ENCODE measurements at regions of chr19 and their contacts with region 1.

Region 1: DNA sequence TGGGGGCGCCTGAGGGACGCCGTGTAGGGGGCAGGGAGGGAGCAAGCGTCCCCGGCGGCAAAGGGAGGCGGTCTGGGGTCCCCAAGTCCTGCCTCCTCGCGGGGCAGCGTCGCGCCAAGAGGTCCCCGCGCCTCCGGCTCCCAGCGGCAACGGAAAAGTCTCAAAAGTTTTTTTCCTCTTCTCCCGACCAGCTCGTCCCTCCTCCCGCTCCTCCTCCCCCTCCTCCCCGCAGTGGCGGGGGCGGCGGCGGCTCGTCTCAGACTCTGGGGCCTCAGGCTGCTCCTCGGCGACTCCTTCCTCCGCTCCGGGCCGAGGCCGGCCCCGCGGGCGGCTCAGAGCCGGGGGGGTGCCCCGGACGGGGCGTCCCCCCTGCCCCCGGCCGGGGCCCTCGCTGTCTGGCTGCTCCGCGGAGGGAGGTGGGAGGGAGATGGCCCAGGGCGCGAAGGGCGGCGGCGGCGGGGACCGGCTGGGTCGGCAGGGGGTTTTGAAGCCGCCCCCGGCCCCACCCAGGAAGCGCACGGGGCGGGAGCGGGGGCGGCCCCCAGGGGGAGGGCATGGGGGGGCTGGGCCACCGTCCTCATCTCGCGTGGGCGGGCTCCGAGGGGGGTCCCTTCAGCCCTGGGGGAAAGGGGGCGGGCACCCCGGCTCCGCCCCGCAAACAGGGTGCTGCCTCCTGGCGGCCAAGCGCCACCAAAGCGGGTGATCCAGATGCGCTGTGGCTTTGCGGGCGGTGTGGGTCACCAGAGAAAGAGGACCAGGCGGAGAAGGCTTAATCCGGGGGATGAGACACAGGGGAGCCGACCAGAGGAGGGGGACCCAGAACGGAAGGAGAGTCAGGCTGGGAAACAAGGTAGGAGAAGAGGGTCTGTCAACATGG is at the start of gene TGFB1:
- DNase-seq: peak; percentile 90 to 97 (median 91)
- ATAC-seq: peak; percentile 64 to 78 (median 72)
- H3K4me3 ChIP-seq: peak within 1 kb of the TSS; percentile 52 to 98 (median 74)
- H3K27ac ChIP-seq: peak within 1 kb of the TSS; percentile 67 to 96 (median 90)
- H3K4me1 ChIP-seq: peaks cover 0 to 73% (median 25%) of the 10 kb centered on the region in 12 donors
- H3K27me3 ChIP-seq: no peaks in the 10 kb centered on the region
- CTCF ChIP-seq: peak; percentile 78 to 98 (median 90)
- POLR2A ChIP-seq: peak in 1 of 2 donors; percentile 65
- total RNA-seq, gene TGFB1: 9.4 to 68.8 (median 13.9) TPM

Region 2: DNA sequence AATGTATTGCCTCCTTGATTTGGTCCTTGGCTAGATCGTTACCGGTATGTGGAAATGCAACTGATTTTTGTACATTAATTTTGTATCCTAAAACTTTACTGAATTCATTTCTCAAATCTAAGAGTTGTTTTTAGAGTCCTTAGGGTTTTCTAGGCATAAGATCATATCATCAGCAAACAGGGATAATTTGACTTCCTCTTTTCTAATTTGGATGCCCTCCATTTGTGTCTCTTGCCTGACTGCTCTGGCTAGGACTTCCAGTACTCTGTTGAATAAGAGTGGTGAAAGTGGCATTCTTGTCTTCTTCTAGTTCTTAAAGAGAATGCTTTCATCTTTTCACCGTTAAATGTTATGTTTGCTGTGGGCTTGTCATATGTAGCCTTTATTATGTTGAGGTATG is 277.4 kb before region 1 on chr19:
- intact Hi-C with region 1: no loop called
- DNase-seq: no peak
- ATAC-seq: no peak
- H3K4me3 ChIP-seq: no peak overlapping the region
- H3K27ac ChIP-seq: no peak overlapping the region
- H3K4me1 ChIP-seq: no peaks in the 10 kb centered on the region
- H3K27me3 ChIP-seq: peaks cover 0 to 12% (median 0%) of the 10 kb centered on the region in 9 donors
- CTCF ChIP-seq: no peak
- POLR2A ChIP-seq: no peak

Region 3: GRCh38 chr19:41206926-41207750 is 146.6 kb before region 1 on chr19:
- intact Hi-C with region 1: loop called in 2 of 10 experiments (anchors 2 kb)
- DNase-seq: peak; percentile 82 to 95 (median 85)
- ATAC-seq: peak; percentile 75 to 89 (median 82)
- H3K4me3 ChIP-seq: peak overlapping the region in 6 of 12 donors; percentile 10 to 36 (median 17)
- H3K27ac ChIP-seq: peak overlapping the region in 11 of 12 donors; percentile 32 to 74 (median 69)
- H3K4me1 ChIP-seq: peaks cover 0 to 9% (median 0%) of the 10 kb centered on the region in 12 donors
- H3K27me3 ChIP-seq: no peaks in the 10 kb centered on the region
- CTCF ChIP-seq: no peak
- POLR2A ChIP-seq: no peak

Region 4: GRCh38 chr19:41321600-41322270 is 32.0 kb before region 1 on chr19:
- intact Hi-C with region 1: loop called in 7 of 10 experiments (anchors 2 to 5 kb)
- DNase-seq: peak in 4 of 5 donors; percentile 50 to 60 (median 60)
- ATAC-seq: no peak
- H3K4me3 ChIP-seq: no peak overlapping the region
- H3K27ac ChIP-seq: peak overlapping the region; percentile 23 to 95 (median 89)
- H3K4me1 ChIP-seq: peaks cover 4 to 60% (median 54%) of the 10 kb centered on the region in 12 donors
- H3K27me3 ChIP-seq: no peaks in the 10 kb centered on the region
- CTCF ChIP-seq: peak; percentile 52 to 81 (median 67)
- POLR2A ChIP-seq: no peak

Region 5: DNA sequence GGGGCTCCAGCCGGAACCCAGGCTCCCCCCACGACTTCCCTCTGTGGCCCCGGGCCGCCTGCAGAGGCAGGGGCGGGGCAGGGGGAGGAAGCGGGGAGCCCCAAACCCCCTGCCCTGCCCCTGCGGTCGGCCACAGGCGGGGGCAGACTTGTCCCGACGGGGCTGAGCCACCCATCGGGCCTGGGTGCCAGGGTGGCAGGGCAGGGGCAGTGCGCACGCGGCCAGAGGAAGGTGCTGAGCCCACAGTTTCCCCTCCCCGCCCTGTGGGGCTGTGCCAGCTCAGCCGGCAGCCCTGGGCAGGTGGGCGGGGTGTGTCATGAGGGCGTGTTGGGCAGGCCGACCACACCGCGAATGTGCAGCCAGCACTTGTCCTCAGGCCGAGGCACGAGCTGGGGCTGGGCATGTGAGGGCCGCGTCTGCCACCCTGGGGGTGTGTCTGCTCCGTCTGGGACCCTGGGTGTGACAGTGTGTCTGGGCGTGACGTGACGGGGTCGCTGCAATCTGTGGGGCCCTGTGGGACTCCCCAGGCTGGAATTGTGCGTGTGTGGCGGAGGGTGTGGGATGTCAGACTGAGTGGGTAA is 26.0 kb before region 1 on chr19:
- intact Hi-C with region 1: loop called in 7 of 10 experiments (anchors 2 to 5 kb)
- DNase-seq: peak; percentile 78 to 91 (median 84)
- ATAC-seq: peak; percentile 8 to 57 (median 38)
- H3K4me3 ChIP-seq: peak overlapping the region in 10 of 12 donors; percentile 18 to 49 (median 44)
- H3K27ac ChIP-seq: peak overlapping the region; percentile 66 to 95 (median 88)
- H3K4me1 ChIP-seq: peaks cover 4 to 95% (median 63%) of the 10 kb centered on the region in 12 donors
- H3K27me3 ChIP-seq: no peaks in the 10 kb centered on the region
- CTCF ChIP-seq: no peak
- POLR2A ChIP-seq: no peak

Region 6: GRCh38 chr19:41334793-41335192 is 18.9 kb before region 1 on chr19:
- intact Hi-C with region 1: loop called in 1 of 10 experiments (anchors 2 kb)
- DNase-seq: no peak
- ATAC-seq: peak; percentile 32 to 71 (median 50)
- H3K4me3 ChIP-seq: peak overlapping the region in 1 of 12 donors; percentile 15
- H3K27ac ChIP-seq: peak overlapping the region in 7 of 12 donors; percentile 23 to 88 (median 43)
- H3K4me1 ChIP-seq: peaks cover 0 to 53% (median 5%) of the 10 kb centered on the region in 12 donors
- H3K27me3 ChIP-seq: no peaks in the 10 kb centered on the region
- CTCF ChIP-seq: no peak
- POLR2A ChIP-seq: no peak

Region 7: DNA sequence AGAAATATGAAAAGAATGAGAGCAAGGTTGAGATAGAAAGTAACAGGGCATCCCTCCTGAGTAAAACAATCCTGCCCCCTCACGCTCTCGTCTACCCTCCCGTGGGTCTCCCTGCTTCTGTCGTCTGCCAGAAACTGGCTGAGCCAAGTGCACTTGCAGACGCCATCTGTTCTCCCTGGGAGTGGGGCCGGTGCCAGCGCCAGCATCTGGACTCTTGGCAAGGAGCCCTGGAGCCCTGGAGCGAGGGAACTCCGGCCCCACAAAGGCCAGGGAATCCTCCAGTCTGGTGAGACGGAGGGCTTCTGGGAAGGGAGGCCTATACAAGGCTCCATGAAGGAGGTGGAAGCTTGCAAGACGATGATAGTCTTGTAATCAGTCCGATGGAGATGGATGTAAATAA is 20.3 kb after region 1 on chr19:
- intact Hi-C with region 1: no loop called
- DNase-seq: peak; percentile 88 to 93 (median 92)
- ATAC-seq: peak; percentile 65 to 87 (median 86)
- H3K4me3 ChIP-seq: no peak overlapping the region
- H3K27ac ChIP-seq: peak overlapping the region in 3 of 12 donors; percentile 11 to 57 (median 13)
- H3K4me1 ChIP-seq: peaks cover 0 to 40% (median 20%) of the 10 kb centered on the region in 12 donors
- H3K27me3 ChIP-seq: no peaks in the 10 kb centered on the region
- CTCF ChIP-seq: no peak
- POLR2A ChIP-seq: no peak

Region 8: DNA sequence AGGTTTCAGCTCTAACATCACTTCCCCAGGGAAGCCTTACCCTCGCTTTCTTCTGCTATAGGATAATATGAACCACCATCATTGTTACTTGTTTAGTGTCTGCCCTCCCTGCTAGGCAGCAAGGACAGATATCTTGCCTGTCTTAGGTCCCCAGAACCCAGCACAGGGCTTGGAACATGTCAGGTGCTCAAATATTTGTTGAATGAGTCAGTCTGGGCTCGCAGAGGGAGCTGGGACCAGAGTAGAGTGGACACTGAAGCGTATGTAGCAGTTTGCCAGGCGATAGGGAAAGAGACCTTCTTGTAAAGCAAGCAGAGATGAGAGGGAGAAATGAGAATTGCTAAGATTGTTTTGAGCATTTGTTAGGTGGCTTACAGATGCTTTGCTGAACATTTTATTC is 55.6 kb after region 1 on chr19:
- intact Hi-C with region 1: loop called in 1 of 10 experiments (anchors 2 kb)
- DNase-seq: peak in 4 of 5 donors; percentile 56 to 66 (median 58)
- ATAC-seq: peak; percentile 69 to 75 (median 73)
- H3K4me3 ChIP-seq: no peak overlapping the region
- H3K27ac ChIP-seq: peak overlapping the region; percentile 55 to 88 (median 78)
- H3K4me1 ChIP-seq: peaks cover 0 to 82% (median 68%) of the 10 kb centered on the region in 12 donors
- H3K27me3 ChIP-seq: no peaks in the 10 kb centered on the region
- CTCF ChIP-seq: no peak
- POLR2A ChIP-seq: no peak